Dendritic cell treated with granulocyte-macrophage colony-stimulating factor and Interleukin-4, amounts not matched to agents 40 ng/mL and 50 ng/mL, for 4 days (primary cell): ENCODE measurements at regions of chr5 and their contacts with region 1.

Region 1: DNA sequence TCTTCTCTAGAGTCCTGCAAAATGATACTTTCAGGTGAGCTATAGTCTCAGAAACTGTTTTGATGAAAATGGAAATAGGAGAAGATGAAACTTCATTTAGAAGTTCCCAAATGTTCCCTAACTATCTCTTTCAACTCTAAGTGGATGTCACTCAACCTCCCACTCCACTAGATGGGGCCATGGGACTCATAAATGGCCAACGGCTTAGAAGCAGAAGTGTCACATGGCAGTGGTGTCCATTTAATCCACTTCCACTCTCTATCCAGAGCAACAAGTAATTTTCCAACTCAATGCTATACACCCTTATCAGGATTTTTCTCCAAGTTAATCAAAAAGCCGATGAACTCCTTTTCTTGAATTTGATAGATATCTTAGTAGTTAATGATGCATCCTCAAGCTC is 295.7 kb downstream of the EDIL3 start:
- H3K4me3 Mint-ChIP-seq: no peak overlapping the region
- H3K27ac Mint-ChIP-seq: no peak overlapping the region
- H3K4me1 Mint-ChIP-seq: no peaks in the 10 kb centered on the region
- H3K27me3 Mint-ChIP-seq: no peaks in the 10 kb centered on the region

Region 2: GRCh38 chr5:83900306-83900705 is 188.7 kb before region 1 on chr5:
- intact Hi-C with region 1: no loop called
- H3K4me3 Mint-ChIP-seq: no peak overlapping the region
- H3K27ac Mint-ChIP-seq: no peak overlapping the region
- H3K4me1 Mint-ChIP-seq: no peaks in the 10 kb centered on the region
- H3K27me3 Mint-ChIP-seq: no peaks in the 10 kb centered on the region

Region 3: GRCh38 chr5:84069608-84070179 is 19.3 kb before region 1 on chr5:
- intact Hi-C with region 1: no loop called
- H3K4me3 Mint-ChIP-seq: no peak overlapping the region
- H3K27ac Mint-ChIP-seq: no peak overlapping the region
- H3K4me1 Mint-ChIP-seq: no peaks in the 10 kb centered on the region
- H3K27me3 Mint-ChIP-seq: no peaks in the 10 kb centered on the region

Region 4: GRCh38 chr5:84137541-84137940 is 48.5 kb after region 1 on chr5:
- intact Hi-C with region 1: no loop called
- H3K4me3 Mint-ChIP-seq: no peak overlapping the region
- H3K27ac Mint-ChIP-seq: no peak overlapping the region
- H3K4me1 Mint-ChIP-seq: no peaks in the 10 kb centered on the region
- H3K27me3 Mint-ChIP-seq: no peaks in the 10 kb centered on the region

Region 5: DNA sequence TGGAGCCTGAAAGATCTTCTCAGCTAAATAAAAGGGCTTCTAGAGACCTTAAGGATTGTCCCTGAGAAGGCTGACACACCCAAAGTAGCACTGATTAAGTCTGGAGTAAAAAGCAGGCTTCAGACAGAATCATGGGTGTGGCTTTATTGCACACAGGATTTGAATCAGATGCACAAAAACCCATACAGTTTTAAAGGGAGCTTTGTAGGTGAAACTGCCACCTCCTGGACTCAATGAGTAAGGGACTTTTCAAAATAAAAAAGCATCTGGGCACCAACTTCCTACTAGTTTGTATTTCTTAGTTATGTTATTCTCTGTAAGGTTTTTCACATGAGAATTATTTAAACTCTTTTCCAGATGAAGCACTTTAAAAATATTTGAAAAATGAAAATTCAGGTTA is 166.3 kb after region 1 on chr5:
- intact Hi-C with region 1: loop called (anchors 5 kb)
- H3K4me3 Mint-ChIP-seq: no peak overlapping the region
- H3K27ac Mint-ChIP-seq: no peak overlapping the region
- H3K4me1 Mint-ChIP-seq: peaks cover 10% of the 10 kb centered on the region
- H3K27me3 Mint-ChIP-seq: no peaks in the 10 kb centered on the region